ENCODE measurements at regions of chr2 and their contacts with region 1.

Region 1: GRCh38 chr2:178478439-178479274 is at the start of gene FKBP7:
- DNase-seq: peak; percentile 89
- ATAC-seq: peak; percentile 73
- H3K4me3 Mint-ChIP-seq: peak within 1 kb of the TSS; percentile 89
- H3K27ac Mint-ChIP-seq: peak within 1 kb of the TSS; percentile 97
- H3K4me1 Mint-ChIP-seq: peaks cover 38% of the 10 kb centered on the region
- H3K27me3 Mint-ChIP-seq: no peaks in the 10 kb centered on the region
- total RNA-seq, gene FKBP7: 3.4 to 4.8 TPM

Region 2: GRCh38 chr2:178498137-178498536 is 19.5 kb after region 1 on chr2:
- CTCF ChIA-PET with region 1: no interaction called
- POLR2A ChIA-PET with region 1: interaction called, 14 read pairs
- intact Hi-C with region 1: no loop called
- DNase-seq: no peak
- ATAC-seq: no peak
- H3K4me3 Mint-ChIP-seq: no peak overlapping the region
- H3K27ac Mint-ChIP-seq: no peak overlapping the region
- H3K4me1 Mint-ChIP-seq: no peaks in the 10 kb centered on the region
- H3K27me3 Mint-ChIP-seq: no peaks in the 10 kb centered on the region

Region 3: DNA sequence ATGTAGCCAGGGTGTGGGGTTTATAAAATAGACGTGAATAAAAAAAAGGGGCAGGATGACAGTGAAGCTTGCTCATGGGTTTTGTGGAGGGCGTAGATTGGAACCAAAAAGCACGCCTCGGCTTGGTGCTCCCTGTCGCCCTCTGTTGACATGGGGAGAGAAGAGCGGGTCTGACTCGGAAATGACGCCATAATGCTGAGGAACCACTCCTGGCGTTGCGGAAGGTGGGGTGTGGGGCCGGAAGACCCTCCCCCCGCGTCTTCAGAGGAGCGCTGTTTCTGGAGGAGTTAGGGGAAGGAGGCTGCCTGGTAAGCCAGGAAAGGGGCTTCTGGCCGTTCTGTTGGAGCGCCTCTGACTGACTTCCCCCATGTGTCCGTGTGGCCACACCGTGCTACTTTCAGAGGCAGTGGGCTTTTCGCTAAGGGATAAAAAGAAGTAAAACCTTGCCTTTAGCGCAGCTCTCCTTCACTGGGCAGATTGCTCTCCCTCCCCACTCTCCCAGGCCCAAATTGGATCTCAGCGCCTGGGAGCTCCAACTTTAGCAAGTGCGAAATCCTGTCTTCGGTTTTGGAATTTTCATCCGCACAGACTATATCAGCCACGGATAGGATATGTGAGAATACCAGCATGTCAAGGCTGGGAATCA is 44.4 kb after region 1 on chr2:
- CTCF ChIA-PET with region 1: interaction called, 7 read pairs
- POLR2A ChIA-PET with region 1: no interaction called
- intact Hi-C with region 1: loop called (anchors 1 kb)
- DNase-seq: peak; percentile 90
- ATAC-seq: peak; percentile 80
- H3K4me3 Mint-ChIP-seq: peak overlapping the region; percentile 85
- H3K27ac Mint-ChIP-seq: peak overlapping the region; percentile 92
- H3K4me1 Mint-ChIP-seq: peaks cover 55% of the 10 kb centered on the region
- H3K27me3 Mint-ChIP-seq: no peaks in the 10 kb centered on the region

Region 4: GRCh38 chr2:178579006-178579405 is 100.3 kb after region 1 on chr2:
- CTCF ChIA-PET with region 1: no interaction called
- POLR2A ChIA-PET with region 1: no interaction called
- intact Hi-C with region 1: no loop called
- DNase-seq: no peak
- ATAC-seq: no peak
- H3K4me3 Mint-ChIP-seq: no peak overlapping the region
- H3K27ac Mint-ChIP-seq: no peak overlapping the region
- H3K4me1 Mint-ChIP-seq: no peaks in the 10 kb centered on the region
- H3K27me3 Mint-ChIP-seq: no peaks in the 10 kb centered on the region

Region 5: DNA sequence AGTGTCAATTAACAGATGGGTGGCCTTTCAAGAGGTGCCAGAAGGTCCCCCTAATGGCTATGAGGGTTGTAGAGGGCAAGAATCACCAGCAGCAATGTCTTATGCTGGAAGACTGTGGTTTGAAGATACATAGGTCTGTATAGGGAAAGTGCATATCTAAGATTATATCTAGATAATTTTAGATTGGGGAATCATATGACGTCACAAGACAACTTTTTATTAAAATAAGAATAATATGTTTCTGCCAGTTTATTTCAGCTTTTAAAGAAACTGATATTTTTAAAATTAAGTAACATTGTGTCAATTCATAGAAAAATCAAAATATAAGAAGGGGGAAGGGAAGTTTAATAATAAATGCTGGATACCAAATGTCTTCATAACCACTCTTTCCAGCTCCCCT is 166.3 kb after region 1 on chr2:
- CTCF ChIA-PET with region 1: no interaction called
- POLR2A ChIA-PET with region 1: no interaction called
- intact Hi-C with region 1: loop called in 1 of 2 experiments (anchors 5 kb)
- DNase-seq: no peak
- ATAC-seq: no peak
- H3K4me3 Mint-ChIP-seq: no peak overlapping the region
- H3K27ac Mint-ChIP-seq: no peak overlapping the region
- H3K4me1 Mint-ChIP-seq: no peaks in the 10 kb centered on the region
- H3K27me3 Mint-ChIP-seq: no peaks in the 10 kb centered on the region

Region 6: GRCh38 chr2:178914259-178914849 is 435.7 kb after region 1 on chr2:
- CTCF ChIA-PET with region 1: no interaction called
- POLR2A ChIA-PET with region 1: no interaction called
- intact Hi-C with region 1: loop called in 1 of 2 experiments (anchors 10 kb)
- DNase-seq: peak; percentile 87
- ATAC-seq: peak; percentile 85
- H3K4me3 Mint-ChIP-seq: no peak overlapping the region
- H3K27ac Mint-ChIP-seq: no peak overlapping the region
- H3K4me1 Mint-ChIP-seq: peaks cover 7% of the 10 kb centered on the region
- H3K27me3 Mint-ChIP-seq: no peaks in the 10 kb centered on the region

Measured in activated CD4-positive, alpha-beta T cell treated with anti-CD3 and anti-CD28 coated beads for 36 hours (primary cell).